PC-9 (cell line): ENCODE measurements at regions of chr1 and their contacts with region 1.

Region 1: DNA sequence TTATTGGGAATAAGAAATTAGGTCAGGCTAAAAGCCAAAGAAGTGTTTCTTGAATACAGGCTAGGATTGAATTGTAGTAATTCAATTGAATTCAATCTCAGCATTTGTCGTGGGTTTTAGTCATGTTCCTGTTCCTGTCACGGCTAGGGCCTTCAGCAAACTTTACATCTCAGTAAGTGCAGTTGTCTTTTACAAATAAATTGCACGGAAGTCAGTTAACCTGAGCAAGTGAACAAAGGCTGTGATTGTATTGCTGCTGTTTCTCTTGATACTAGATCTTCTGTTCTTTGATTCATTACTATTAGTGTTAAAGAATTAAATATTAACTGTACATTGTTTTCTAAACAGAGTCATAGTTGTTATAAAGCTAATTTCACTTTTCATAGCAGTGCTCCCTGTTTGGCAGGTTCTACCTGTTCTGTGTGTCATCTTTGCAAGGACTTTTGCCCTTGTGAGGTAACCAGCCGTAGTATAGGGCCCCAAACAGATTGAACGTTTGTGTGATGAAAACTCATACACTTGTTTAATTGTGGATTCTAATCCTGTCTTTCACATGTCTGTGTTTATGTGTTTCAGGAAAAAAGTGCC is 164.4 kb downstream of the EDEM3 start:
- DNase-seq: peak; percentile 49 to 82
- H3K4me3 ChIP-seq: peak overlapping the region; percentile 37
- H3K27ac ChIP-seq: peak overlapping the region; percentile 53
- H3K4me1 ChIP-seq: peaks cover 19% of the 10 kb centered on the region
- H3K27me3 ChIP-seq: no peaks in the 10 kb centered on the region
- CTCF ChIP-seq: no peak

Region 2: GRCh38 chr1:183932412-183932811 is 657.8 kb before region 1 on chr1:
- CTCF ChIA-PET with region 1: no interaction called
- POLR2A ChIA-PET with region 1: interaction called, 22 read pairs
- intact Hi-C with region 1: no loop called
- DNase-seq: no peak
- H3K4me3 ChIP-seq: no peak overlapping the region
- H3K27ac ChIP-seq: no peak overlapping the region
- H3K4me1 ChIP-seq: no peaks in the 10 kb centered on the region
- H3K27me3 ChIP-seq: no peaks in the 10 kb centered on the region
- CTCF ChIP-seq: no peak

Region 3: DNA sequence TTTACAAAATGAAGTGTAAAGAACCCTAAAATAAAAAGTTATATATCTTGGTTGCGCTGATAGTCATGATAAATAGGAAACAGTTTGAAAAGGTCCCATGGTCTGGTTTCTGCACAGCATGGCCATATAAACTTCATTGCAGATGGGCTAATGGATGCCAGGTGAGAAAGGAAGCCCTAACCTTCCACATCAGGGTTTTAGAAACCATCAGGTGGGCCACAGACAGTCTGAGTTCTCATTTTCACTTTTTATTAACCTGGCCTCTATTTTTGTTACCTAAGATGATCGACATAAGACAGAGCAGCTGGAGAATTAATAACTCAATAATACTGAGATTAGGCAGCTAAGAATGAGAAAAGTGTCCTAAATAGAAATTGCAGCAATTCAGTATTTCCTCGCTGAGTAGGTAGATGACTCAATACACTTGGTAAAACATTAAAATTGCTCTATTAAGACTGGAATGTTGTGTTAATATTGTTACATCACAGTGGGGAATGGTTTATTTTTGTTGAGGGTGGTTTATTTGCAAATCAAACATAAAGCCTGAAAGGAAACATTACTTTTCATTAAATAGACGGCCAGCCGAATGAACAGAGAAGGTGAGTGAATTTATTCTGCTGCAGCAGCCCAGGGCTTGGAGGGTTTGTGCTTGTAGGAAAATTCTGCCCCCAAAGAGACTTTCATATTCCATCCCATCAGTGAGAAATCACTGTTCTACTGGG is 182.3 kb before region 1 on chr1:
- CTCF ChIA-PET with region 1: no interaction called
- POLR2A ChIA-PET with region 1: no interaction called
- intact Hi-C with region 1: no loop called
- DNase-seq: no peak
- H3K4me3 ChIP-seq: no peak overlapping the region
- H3K27ac ChIP-seq: no peak overlapping the region
- H3K4me1 ChIP-seq: no peaks in the 10 kb centered on the region
- H3K27me3 ChIP-seq: no peaks in the 10 kb centered on the region
- CTCF ChIP-seq: no peak

Region 4: GRCh38 chr1:184419728-184420161 is 170.5 kb before region 1 on chr1:
- CTCF ChIA-PET with region 1: no interaction called
- POLR2A ChIA-PET with region 1: no interaction called
- intact Hi-C with region 1: no loop called
- DNase-seq: no peak
- H3K4me3 ChIP-seq: no peak overlapping the region
- H3K27ac ChIP-seq: no peak overlapping the region
- H3K4me1 ChIP-seq: no peaks in the 10 kb centered on the region
- H3K27me3 ChIP-seq: no peaks in the 10 kb centered on the region
- CTCF ChIP-seq: no peak

Region 5: GRCh38 chr1:184483101-184483683 is 107.1 kb before region 1 on chr1:
- CTCF ChIA-PET with region 1: no interaction called
- POLR2A ChIA-PET with region 1: no interaction called
- intact Hi-C with region 1: loop called (anchors 1 kb)
- DNase-seq: peak; percentile 32 to 88
- H3K4me3 ChIP-seq: no peak overlapping the region
- H3K27ac ChIP-seq: peak overlapping the region; percentile 39
- H3K4me1 ChIP-seq: peaks cover 33% of the 10 kb centered on the region
- H3K27me3 ChIP-seq: no peaks in the 10 kb centered on the region
- CTCF ChIP-seq: no peak

Region 6: DNA sequence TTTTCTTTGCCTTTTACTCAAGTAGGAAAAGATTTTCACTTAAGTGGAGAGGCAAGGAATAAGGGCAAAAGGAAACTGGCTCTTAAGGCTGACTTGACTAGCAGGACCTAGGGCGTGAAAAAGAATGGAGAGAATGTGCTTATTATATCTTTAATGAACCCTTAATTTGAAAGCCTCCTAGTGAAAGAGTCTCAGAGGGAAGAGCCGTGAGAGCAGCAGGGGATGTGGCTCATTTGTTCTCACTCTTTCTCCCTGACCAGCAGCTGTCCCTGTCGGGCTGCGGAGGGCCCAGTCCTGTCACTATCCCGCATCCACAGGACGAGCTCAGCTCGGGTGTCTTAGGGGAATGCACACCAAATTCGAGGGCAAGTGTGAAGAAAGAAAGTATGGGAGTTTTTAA is 15.7 kb before region 1 on chr1:
- CTCF ChIA-PET with region 1: interaction called, 17 read pairs
- POLR2A ChIA-PET with region 1: no interaction called
- intact Hi-C with region 1: no loop called
- DNase-seq: no peak
- H3K4me3 ChIP-seq: no peak overlapping the region
- H3K27ac ChIP-seq: no peak overlapping the region
- H3K4me1 ChIP-seq: no peaks in the 10 kb centered on the region
- H3K27me3 ChIP-seq: no peaks in the 10 kb centered on the region
- CTCF ChIP-seq: no peak